ENCODE measurements at regions of chr20 and their contacts with region 1.

Region 1: GRCh38 chr20:45436732-45437391 is 20.9 kb downstream of the PIGT start:
- DNase-seq: peak; percentile 68 to 93
- H3K4me3 ChIP-seq: peak overlapping the region; percentile 39
- H3K4me1 ChIP-seq: peaks cover 6% of the 10 kb centered on the region; the same call in 1 of the 2 replicates
- H3K27me3 ChIP-seq: no peaks in the 10 kb centered on the region

Region 2: DNA sequence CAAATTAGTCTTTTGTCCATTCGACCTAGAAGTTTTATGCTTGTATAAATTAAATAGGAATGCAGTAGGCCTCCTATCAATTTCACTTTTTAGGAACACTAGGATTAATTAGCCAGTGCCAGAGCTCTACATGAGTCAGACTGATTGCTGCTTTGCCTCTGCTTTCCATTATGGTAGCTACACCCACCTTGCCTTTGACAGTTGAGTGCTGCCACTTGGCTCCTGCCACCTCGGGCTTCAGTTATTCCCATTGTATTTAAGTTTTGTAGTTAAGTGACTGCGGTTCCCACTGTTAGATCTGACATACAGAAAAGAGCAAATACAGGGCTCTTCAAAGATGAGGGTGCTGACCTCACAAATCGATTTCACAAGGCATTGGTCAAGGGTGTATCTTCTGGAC is 296.0 kb before region 1 on chr20:
- in situ Hi-C with region 1: no loop called
- DNase-seq: no peak
- H3K4me3 ChIP-seq: no peak overlapping the region
- H3K4me1 ChIP-seq: no peaks in the 10 kb centered on the region
- H3K27me3 ChIP-seq: peaks cover 9% of the 10 kb centered on the region

Region 3: GRCh38 chr20:45311589-45312211 is 125.2 kb before region 1 on chr20:
- in situ Hi-C with region 1: loop called (anchors 10 kb)
- DNase-seq: peak; percentile 64 to 85
- H3K4me3 ChIP-seq: no peak overlapping the region
- H3K4me1 ChIP-seq: no peaks in the 10 kb centered on the region
- H3K27me3 ChIP-seq: no peaks in the 10 kb centered on the region

Region 4: GRCh38 chr20:45373353-45374100 is 63.3 kb before region 1 on chr20:
- in situ Hi-C with region 1: loop called (anchors 5 kb)
- DNase-seq: peak; percentile 69 to 96
- H3K4me3 ChIP-seq: peak overlapping the region; percentile 25
- H3K4me1 ChIP-seq: peaks cover 7% of the 10 kb centered on the region; the same call in 1 of the 2 replicates
- H3K27me3 ChIP-seq: no peaks in the 10 kb centered on the region